ENCODE measurements at regions of chr20 and their contacts with region 1.

Region 1: GRCh38 chr20:32535953-32536823 is 48.9 kb downstream of the NOL4L start:
- DNase-seq: peak; percentile 59 to 91 (median 78)
- ATAC-seq: peak; percentile 77
- H3K4me3 ChIP-seq: peak overlapping the region; percentile 77
- H3K4me3 Mint-ChIP-seq: peak overlapping the region; percentile 82 to 99 (median 88)
- H3K27ac ChIP-seq: peak overlapping the region; percentile 86
- H3K27ac Mint-ChIP-seq: peak overlapping the region; percentile 84 to 98 (median 95)
- H3K4me1 ChIP-seq: peaks cover 73 to 77% of the 10 kb centered on the region in 2 donors
- H3K4me1 Mint-ChIP-seq: peaks cover 61 to 87% (median 84%) of the 10 kb centered on the region in 7 donors
- H3K27me3 ChIP-seq: no peaks in the 10 kb centered on the region
- H3K27me3 Mint-ChIP-seq: no peaks in the 10 kb centered on the region

Region 2: GRCh38 chr20:32387252-32387651 is 148.9 kb before region 1 on chr20:
- CTCF ChIA-PET with region 1: no interaction called
- POLR2A ChIA-PET with region 1: no interaction called
- intact Hi-C with region 1: no loop called
- DNase-seq: peak in 7 of 9 donors; percentile 65 to 86 (median 81)
- ATAC-seq: peak; percentile 96
- H3K4me3 ChIP-seq: no peak overlapping the region
- H3K4me3 Mint-ChIP-seq: peak overlapping the region; percentile 2 to 72 (median 48)
- H3K27ac ChIP-seq: peak overlapping the region; percentile 57
- H3K27ac Mint-ChIP-seq: peak overlapping the region; percentile 6 to 92 (median 63)
- H3K4me1 ChIP-seq: peaks cover 23 to 30% of the 10 kb centered on the region in 2 donors
- H3K4me1 Mint-ChIP-seq: peaks cover 47 to 87% (median 75%) of the 10 kb centered on the region in 7 donors
- H3K27me3 ChIP-seq: no peaks in the 10 kb centered on the region
- H3K27me3 Mint-ChIP-seq: no peaks in the 10 kb centered on the region

Region 3: GRCh38 chr20:32509639-32510066 is 26.5 kb before region 1 on chr20:
- CTCF ChIA-PET with region 1: interaction called, 8 read pairs
- POLR2A ChIA-PET with region 1: interaction called, 623 read pairs
- intact Hi-C with region 1: loop called in 1 of 2 experiments (anchors 1 kb)
- DNase-seq: peak in 7 of 9 donors; percentile 70 to 86 (median 81)
- ATAC-seq: peak; percentile 86
- H3K4me3 ChIP-seq: peak overlapping the region; percentile 54
- H3K4me3 Mint-ChIP-seq: peak overlapping the region; percentile 56 to 95 (median 90)
- H3K27ac ChIP-seq: peak overlapping the region; percentile 84
- H3K27ac Mint-ChIP-seq: peak overlapping the region; percentile 80 to 98 (median 97)
- H3K4me1 ChIP-seq: peaks cover 42 to 71% of the 10 kb centered on the region in 2 donors
- H3K4me1 Mint-ChIP-seq: peaks cover 54 to 90% (median 79%) of the 10 kb centered on the region in 7 donors
- H3K27me3 ChIP-seq: no peaks in the 10 kb centered on the region
- H3K27me3 Mint-ChIP-seq: no peaks in the 10 kb centered on the region

Region 4: DNA sequence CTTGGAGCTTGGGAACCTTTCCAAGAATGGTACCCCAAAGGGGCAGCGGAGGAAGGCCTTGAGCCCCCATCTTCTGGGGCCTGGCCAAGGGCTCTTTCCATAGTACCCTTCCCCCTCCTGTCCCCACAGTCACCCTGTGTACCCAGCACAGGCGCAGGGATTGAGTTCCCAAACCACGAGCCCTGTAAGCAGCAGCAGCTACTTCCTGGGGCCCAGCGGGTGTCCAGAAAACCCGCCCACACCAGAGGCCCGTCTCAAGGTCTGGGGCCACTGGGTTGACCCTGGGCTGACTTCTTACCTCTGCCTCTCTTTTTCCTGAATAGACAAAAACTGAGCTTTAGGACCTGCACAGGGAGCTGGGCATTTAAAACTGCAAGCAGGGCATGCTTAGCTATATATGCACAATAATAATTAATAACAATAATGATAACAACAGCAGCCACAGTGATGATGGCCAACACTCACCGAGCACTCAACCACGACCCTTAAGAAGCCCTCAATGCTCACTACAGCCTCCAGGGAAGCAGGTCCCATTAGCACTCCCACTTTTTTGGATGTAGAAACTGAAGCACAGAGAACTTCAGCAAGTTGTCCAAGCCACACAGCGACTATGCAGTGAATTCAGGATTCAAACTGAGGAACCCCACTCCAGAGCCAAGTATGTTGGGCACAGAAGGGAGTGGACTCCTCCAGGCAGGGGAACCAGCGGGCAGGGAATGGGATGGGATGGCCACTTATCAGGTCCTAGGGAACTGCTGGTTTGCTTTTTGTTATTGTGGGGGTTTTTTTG is 34.4 kb after region 1 on chr20:
- CTCF ChIA-PET with region 1: interaction called, 5 read pairs
- POLR2A ChIA-PET with region 1: interaction called, 13 read pairs
- intact Hi-C with region 1: no loop called
- DNase-seq: no peak
- ATAC-seq: no peak
- H3K4me3 ChIP-seq: no peak overlapping the region
- H3K4me3 Mint-ChIP-seq: peak overlapping the region in 1 of 10 donors; percentile 74
- H3K27ac ChIP-seq: peak overlapping the region; percentile 44
- H3K27ac Mint-ChIP-seq: peak overlapping the region in 4 of 9 donors; percentile 66 to 86 (median 84)
- H3K4me1 ChIP-seq: peaks cover 33 to 51% of the 10 kb centered on the region in 2 donors
- H3K4me1 Mint-ChIP-seq: peaks cover 0 to 59% (median 19%) of the 10 kb centered on the region in 7 donors
- H3K27me3 ChIP-seq: no peaks in the 10 kb centered on the region
- H3K27me3 Mint-ChIP-seq: no peaks in the 10 kb centered on the region

Region 5: DNA sequence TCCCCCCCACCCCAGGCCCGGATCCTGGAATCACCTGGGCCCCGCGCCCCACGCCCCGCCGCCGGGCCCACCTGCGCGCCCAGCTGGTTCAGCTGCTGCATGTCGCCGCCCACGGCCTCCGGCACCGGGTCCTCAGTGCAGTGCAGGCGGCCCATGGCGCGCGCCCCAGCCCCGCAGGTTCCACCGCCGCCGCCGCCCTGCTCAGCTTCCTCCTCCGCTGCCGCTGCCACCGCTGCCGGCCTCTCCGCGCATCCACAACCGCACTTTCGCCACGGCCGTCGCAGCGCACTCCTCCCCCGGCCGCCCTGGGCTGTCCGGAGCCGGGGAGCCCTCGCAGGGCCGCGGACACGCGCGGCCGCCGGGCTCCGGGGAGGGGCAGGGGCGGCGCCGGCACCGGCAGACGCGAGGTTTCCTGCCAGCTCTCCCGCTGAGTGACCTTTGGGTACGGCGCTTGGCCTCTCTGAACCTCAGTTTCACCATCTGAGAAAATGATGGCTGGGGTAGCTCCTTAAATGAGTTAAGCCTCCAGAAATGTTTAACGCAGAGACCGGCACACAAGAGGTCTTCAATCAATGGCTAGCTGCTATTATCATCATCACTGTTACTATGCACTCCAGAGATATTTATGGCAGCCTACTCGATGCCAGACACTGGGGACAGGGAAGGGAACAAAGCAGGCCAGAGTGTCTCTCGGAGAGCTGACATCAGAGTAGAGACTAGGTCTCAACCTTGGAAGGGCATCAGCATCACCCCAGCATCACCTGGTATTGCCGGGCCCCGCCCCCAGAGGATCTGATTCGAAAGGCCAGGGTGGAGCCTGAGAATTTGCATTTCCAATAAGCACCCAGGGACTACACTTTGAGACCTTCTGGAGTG is 207.3 kb after region 1 on chr20 and contains the start of gene COMMD7:
- CTCF ChIA-PET with region 1: no interaction called
- POLR2A ChIA-PET with region 1: interaction called, 3 read pairs
- intact Hi-C with region 1: loop called (anchors 5 kb)
- DNase-seq: peak; percentile 48 to 72 (median 63)
- ATAC-seq: peak; percentile 83
- H3K4me3 ChIP-seq: peak within 1 kb of the TSS; percentile 96
- H3K4me3 Mint-ChIP-seq: peak within 1 kb of the TSS; percentile 93 to 100 (median 96)
- H3K27ac ChIP-seq: peak within 1 kb of the TSS; percentile 86
- H3K27ac Mint-ChIP-seq: peak within 1 kb of the TSS; percentile 93 to 98 (median 97)
- H3K4me1 ChIP-seq: peaks cover 18% of the 10 kb centered on the region in 2 donors
- H3K4me1 Mint-ChIP-seq: peaks cover 6 to 52% (median 35%) of the 10 kb centered on the region in 7 donors
- H3K27me3 ChIP-seq: no peaks in the 10 kb centered on the region
- H3K27me3 Mint-ChIP-seq: no peaks in the 10 kb centered on the region
- total RNA-seq, gene COMMD7: 31.5 to 66.3 (median 40.3) TPM

Region 6: DNA sequence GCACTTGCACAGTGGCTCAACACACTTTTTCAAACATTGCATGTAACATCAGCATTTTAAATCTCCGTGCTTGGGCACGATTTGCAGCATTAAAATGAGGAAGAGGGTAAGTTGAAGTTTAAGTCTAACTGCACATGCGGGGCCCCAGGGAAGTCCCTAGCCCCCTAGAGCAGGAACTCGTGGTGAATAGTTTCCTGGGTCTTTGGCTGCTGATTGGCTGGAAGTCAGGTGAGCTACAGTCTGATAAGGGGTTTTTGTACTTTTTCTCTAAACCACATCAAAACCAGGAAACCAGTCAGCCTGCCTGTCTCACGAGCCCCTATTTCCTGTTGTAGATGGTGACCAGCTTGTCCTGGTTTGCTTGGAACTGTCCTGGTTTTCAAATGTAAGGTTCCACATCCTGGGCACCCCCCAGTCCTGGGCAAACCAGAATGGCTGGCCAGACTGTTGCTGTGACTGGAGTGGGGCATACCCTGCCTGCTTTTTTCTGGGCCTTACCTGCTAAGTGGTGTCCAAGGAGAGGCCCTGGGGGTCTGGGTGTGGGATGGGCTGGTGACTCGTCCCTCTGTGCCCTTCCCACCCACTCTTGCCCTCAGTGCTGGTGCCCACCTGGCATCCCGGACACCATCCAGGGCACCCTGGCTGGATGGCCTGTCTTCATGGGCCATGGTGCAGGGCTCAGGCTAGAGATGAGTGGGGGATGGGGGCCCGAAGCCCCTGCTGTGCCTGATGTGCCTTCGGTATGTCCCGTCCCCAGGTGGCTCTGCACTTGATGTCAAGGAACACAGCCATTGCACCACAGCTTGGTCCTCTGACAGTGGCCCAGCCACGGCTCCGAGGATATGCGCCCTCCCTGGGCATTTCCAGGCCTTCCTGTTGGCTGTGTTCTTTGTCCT is 436.2 kb after region 1 on chr20:
- CTCF ChIA-PET with region 1: no interaction called
- POLR2A ChIA-PET with region 1: no interaction called
- intact Hi-C with region 1: loop called in 1 of 2 experiments (anchors 2 kb)
- DNase-seq: peak; percentile 31 to 96 (median 94)
- ATAC-seq: peak; percentile 90
- H3K4me3 ChIP-seq: peak overlapping the region; percentile 53
- H3K4me3 Mint-ChIP-seq: peak overlapping the region in 1 of 10 donors; percentile 54
- H3K27ac ChIP-seq: peak overlapping the region; percentile 85
- H3K27ac Mint-ChIP-seq: no peak overlapping the region
- H3K4me1 ChIP-seq: peaks cover 73 to 92% of the 10 kb centered on the region in 2 donors
- H3K4me1 Mint-ChIP-seq: peaks cover 13 to 56% (median 46%) of the 10 kb centered on the region in 7 donors
- H3K27me3 ChIP-seq: no peaks in the 10 kb centered on the region
- H3K27me3 Mint-ChIP-seq: no peaks in the 10 kb centered on the region

Measured in naive thymus-derived CD4-positive, alpha-beta T cell (primary cell).